H1 (cell line): ENCODE measurements at regions of chr19 and their contacts with region 1.

Region 1: GRCh38 chr19:36103626-36104552 is 7.1 kb upstream of the OVOL3 start:
- DNase-seq: no peak
- H3K4me3 ChIP-seq: no peak overlapping the region
- H3K27ac ChIP-seq: no peak overlapping the region
- H3K4me1 ChIP-seq: peaks cover 0 to 6% (median under 1%) of the 10 kb centered on the region in 4 experiments; a peak in 3 of 7 replicates
- H3K27me3 ChIP-seq: no peaks in the 10 kb centered on the region
- CTCF ChIP-seq: no peak
- EP300 ChIP-seq: no peak
- POLR2A ChIP-seq: no peak
- RAD21 ChIP-seq: no peak

Region 2: GRCh38 chr19:35977446-35978222 is 126.3 kb before region 1 on chr19:
- CTCF ChIA-PET with region 1: no interaction called
- POLR2A ChIA-PET with region 1: no interaction called
- DNase-seq: peak in 1 of 2 experiments; percentile 86
- H3K4me3 ChIP-seq: no peak overlapping the region
- H3K27ac ChIP-seq: no peak overlapping the region
- H3K4me1 ChIP-seq: peaks cover 0 to 6% (median 1%) of the 10 kb centered on the region in 4 experiments; a peak in 6 of 7 replicates
- H3K27me3 ChIP-seq: peaks cover 0 to 2% (median 0%) of the 10 kb centered on the region in 4 experiments; a peak in 1 of 7 replicates
- CTCF ChIP-seq: peak; percentile 86 to 98 (median 93)
- EP300 ChIP-seq: 0 out of 3 replicates have a peak, but pooled peaks of 1 of the 2 experiments have one; percentile 31
- POLR2A ChIP-seq: no peak
- RAD21 ChIP-seq: peak; percentile 65 to 79

Region 3: DNA sequence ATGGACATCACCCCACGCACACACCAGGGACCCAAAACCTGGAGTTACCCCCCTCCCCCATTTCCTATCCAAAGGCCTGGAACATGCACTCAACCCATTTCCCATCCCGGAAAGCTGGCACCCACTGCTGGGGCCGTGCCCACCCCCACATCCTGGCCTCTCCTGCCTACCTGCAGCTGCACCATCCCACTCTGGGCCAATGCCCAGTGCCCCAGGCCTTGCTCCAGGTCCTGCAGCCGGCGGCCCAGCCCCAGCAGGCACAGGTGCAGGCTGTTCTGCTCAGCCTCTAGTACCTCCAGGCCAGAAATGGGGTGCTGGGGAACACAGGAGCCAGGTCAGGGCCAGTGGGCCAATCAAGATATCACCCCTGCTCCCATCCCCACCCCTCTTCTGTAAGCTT is 96.9 kb before region 1 on chr19:
- CTCF ChIA-PET with region 1: no interaction called
- POLR2A ChIA-PET with region 1: no interaction called
- DNase-seq: no peak
- H3K4me3 ChIP-seq: no peak overlapping the region
- H3K27ac ChIP-seq: no peak overlapping the region
- H3K4me1 ChIP-seq: peaks cover 0 to 13% (median 8%) of the 10 kb centered on the region in 4 experiments; a peak in 5 of 7 replicates
- H3K27me3 ChIP-seq: no peaks in the 10 kb centered on the region
- CTCF ChIP-seq: no peak
- EP300 ChIP-seq: no peak
- POLR2A ChIP-seq: no peak
- RAD21 ChIP-seq: no peak

Region 4: DNA sequence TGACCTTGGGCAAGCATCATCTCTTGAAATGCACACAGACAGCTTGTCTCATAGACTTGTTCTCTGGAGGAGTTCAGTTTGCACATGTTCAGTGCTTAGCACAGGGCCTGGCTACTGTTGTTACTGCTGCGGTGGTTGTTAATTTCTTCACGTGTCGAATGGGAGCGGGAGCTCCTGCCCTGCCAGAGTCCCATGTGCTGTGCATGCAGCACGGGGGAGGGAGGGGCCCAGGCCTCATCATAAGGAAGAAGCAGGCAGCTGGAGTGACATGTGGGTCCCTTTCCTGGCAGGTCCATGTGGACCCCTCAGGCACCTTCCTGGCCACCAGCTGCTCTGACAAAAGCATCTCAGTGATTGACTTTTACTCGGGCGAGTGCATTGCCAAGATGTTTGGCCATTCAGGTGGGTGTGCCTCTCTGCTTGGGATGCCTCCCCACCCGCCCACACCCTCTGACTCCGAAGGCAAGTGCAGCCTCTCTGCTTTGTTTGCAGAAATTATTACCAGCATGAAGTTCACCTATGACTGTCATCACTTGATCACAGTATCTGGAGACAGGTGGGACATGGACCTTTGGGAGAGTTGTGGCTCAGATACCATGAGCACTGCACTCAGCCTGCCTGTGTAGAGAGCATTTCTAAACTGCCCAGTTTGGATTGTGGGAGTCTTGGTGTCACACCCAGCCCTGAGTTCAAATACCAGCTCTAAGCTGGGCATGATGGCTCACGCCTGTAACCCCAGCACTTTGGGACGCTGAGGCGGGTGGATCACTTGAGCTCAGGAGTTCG is 12.8 kb before region 1 on chr19:
- CTCF ChIA-PET with region 1: interaction called, 3 read pairs
- POLR2A ChIA-PET with region 1: interaction called, 17 read pairs
- DNase-seq: no peak
- H3K4me3 ChIP-seq: no peak overlapping the region
- H3K27ac ChIP-seq: no peak overlapping the region
- H3K4me1 ChIP-seq: no peaks in the 10 kb centered on the region
- H3K27me3 ChIP-seq: no peaks in the 10 kb centered on the region
- CTCF ChIP-seq: no peak
- EP300 ChIP-seq: no peak
- POLR2A ChIP-seq: no peak
- RAD21 ChIP-seq: no peak

Region 5: DNA sequence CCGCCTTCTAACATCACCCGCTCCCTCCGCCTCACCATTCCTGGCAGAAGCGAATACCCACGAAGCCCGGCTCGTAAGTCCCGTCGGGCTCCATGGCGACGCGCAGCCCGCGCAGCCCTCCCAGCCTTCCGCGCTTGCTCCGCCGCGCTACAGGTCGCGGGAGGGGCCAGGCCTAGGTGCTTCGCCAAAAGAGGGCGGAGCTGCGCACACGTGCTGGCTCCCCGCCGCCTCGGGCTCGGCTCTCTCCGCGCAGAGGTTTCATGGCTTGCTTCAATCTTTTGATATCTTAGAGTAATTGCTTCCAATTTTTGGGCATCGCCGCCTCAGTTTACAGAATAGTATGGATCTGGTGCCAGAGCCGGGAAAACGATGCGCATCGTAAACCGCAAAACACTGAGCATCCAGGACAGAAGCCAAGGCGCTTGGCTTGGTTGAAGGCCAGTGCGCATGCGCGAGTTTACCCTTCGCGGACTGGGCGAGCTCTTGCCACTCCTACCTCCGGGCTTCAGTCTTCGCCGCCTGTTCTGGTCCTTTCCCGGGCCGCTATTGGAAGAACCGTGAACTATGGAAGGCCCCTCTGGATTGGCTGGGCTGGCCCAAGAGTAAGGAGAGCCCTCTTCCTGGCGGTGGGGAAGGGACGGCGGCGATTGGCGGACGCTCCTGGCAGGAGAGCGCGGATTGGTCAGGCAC is 11.0 kb after region 1 on chr19 and contains the start of gene POLR2I:
- CTCF ChIA-PET with region 1: interaction called, 4 read pairs
- POLR2A ChIA-PET with region 1: interaction called, 18 read pairs
- DNase-seq: peak; percentile 98 to 99
- H3K4me3 ChIP-seq: peak within 1 kb of the TSS; percentile 73 to 96 (median 82)
- H3K27ac ChIP-seq: peak within 1 kb of the TSS; percentile 76
- H3K4me1 ChIP-seq: peaks cover 8 to 24% (median 18%) of the 10 kb centered on the region in 4 experiments
- H3K27me3 ChIP-seq: no peaks in the 10 kb centered on the region
- CTCF ChIP-seq: no peak
- EP300 ChIP-seq: no peak
- POLR2A ChIP-seq: peak in 1 of 2 experiments; percentile 70; a peak in 2 of 3 replicates
- RAD21 ChIP-seq: no peak
- total RNA-seq, gene POLR2I: 149 and 150 TPM in 2 replicates

Region 6: GRCh38 chr19:36139473-36140303 is 35.8 kb after region 1 on chr19 and contains the start of gene CAPNS1:
- CTCF ChIA-PET with region 1: no interaction called
- POLR2A ChIA-PET with region 1: no interaction called
- DNase-seq: peak; percentile 91 to 98
- H3K4me3 ChIP-seq: peak within 1 kb of the TSS; percentile 89 to 98 (median 97)
- H3K27ac ChIP-seq: peak within 1 kb of the TSS; percentile 36; the same call in 1 of the 2 replicates
- H3K4me1 ChIP-seq: peaks cover 0 to 6% (median 5%) of the 10 kb centered on the region in 4 experiments; a peak in 3 of 7 replicates
- H3K27me3 ChIP-seq: no peaks in the 10 kb centered on the region
- CTCF ChIP-seq: peak in 2 of 3 experiments; percentile 4 to 14; a peak in 2 of 4 replicates
- EP300 ChIP-seq: peak in 1 of 2 experiments; percentile 16; a peak in 1 of 3 replicates
- POLR2A ChIP-seq: peak in 1 of 2 experiments; percentile 72; a peak in 1 of 3 replicates
- RAD21 ChIP-seq: no peak
- total RNA-seq, gene CAPNS1: 382 and 386 TPM in 2 replicates

Region 7: DNA sequence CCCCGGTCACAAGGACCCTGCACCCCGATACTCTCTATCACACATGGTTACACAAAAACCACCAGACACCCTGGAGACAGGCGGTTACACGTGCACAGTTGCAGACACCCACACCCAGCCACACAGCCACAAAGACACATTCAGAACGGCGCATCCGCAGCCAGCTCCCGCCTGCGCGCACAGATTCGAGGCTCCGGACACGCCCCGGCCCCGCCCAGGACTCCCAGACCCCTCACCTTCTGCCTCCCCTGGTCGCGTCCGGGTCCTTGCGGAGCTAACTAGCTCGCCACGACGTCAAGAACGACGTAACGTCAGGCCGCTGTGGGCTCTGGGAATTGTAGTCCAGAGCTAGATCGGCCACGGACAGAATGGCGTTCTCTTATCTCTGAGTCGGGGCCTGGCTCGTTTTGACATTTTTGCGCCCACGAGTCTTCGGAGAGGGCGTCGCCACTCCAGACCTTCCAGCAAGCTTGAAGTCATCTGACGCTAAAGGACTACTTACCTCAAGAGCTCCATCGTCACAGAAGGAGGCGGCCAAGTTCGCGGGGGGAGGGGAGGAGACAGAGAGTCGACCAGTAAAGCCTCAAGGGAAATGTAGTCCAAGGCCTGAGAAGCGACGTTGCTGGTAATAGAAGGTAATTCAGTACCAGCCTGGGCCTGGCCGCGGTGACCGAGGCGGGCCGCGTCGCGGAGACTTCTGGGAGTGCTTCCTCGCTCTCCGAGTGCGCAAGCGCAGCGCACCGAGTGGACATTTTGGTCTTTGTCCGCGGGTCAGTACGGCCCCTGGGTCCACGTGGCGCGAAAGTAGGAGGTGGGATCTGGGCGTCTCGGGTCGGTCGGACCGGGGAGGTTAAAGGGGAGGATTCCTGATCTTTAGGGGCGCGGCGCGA is 110.7 kb after region 1 on chr19 and contains the starts of genes ZNF146 and ZNF565:
- CTCF ChIA-PET with region 1: no interaction called
- POLR2A ChIA-PET with region 1: no interaction called
- DNase-seq: peak; percentile 91 to 95
- H3K4me3 ChIP-seq: peak within 1 kb of the TSS; percentile 85 to 92 (median 90)
- H3K27ac ChIP-seq: peak within 1 kb of the TSS; percentile 97
- H3K4me1 ChIP-seq: peaks cover 0 to 6% (median 2%) of the 10 kb centered on the region in 4 experiments; a peak in 5 of 7 replicates
- H3K27me3 ChIP-seq: no peaks in the 10 kb centered on the region
- CTCF ChIP-seq: no peak
- EP300 ChIP-seq: 0 out of 3 replicates have a peak, but pooled peaks of 1 of the 2 experiments have one; percentile 6
- POLR2A ChIP-seq: peak; percentile 74 to 93; a peak in 2 of 3 replicates
- RAD21 ChIP-seq: no peak
- total RNA-seq, gene ZNF146: 154 and 161 TPM in 2 replicates
- total RNA-seq, gene ZNF565: 2.7 and 3.1 TPM in 2 replicates